Vagina (tissue), 2 donors: ENCODE measurements at regions of chr7 and their contacts with region 1.

Region 1: GRCh38 chr7:71237945-71238344 is 106.0 kb downstream of the GALNT17 start:
- DNase-seq: no peak
- H3K4me3 ChIP-seq: no peak overlapping the region
- H3K27ac ChIP-seq: peak overlapping the region; percentile 66
- H3K4me1 ChIP-seq: peaks cover 20% of the 10 kb centered on the region
- H3K27me3 ChIP-seq: no peaks in the 10 kb centered on the region
- CTCF ChIP-seq: no peak
- POLR2A ChIP-seq: no peak

Region 2: GRCh38 chr7:71193099-71193810 is 44.7 kb before region 1 on chr7:
- intact Hi-C with region 1: loop called (anchors 2 kb)
- DNase-seq: no peak
- H3K4me3 ChIP-seq: no peak overlapping the region
- H3K27ac ChIP-seq: no peak overlapping the region
- H3K4me1 ChIP-seq: no peaks in the 10 kb centered on the region
- H3K27me3 ChIP-seq: no peaks in the 10 kb centered on the region
- CTCF ChIP-seq: no peak
- POLR2A ChIP-seq: no peak

Region 3: DNA sequence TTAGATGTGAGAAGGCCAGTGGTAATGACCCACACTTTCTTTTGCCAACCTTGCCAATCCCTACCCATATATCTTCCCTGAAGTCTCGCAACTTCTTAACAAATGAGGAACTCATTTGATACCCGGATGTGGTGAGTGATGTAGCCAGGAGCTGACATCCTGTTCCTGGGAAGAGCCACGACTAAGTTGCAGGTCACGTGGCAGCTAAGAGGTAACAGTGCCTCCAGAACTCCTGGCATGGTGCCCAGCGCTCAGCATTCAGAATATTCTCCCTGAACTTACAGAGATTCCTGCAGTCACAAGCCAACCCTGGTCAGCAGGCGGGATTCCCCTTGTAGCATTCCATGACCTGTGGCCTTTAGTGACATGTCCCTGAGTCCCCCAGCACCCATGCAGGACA is 176.5 kb after region 1 on chr7:
- intact Hi-C with region 1: no loop called
- DNase-seq: no peak
- H3K4me3 ChIP-seq: no peak overlapping the region
- H3K27ac ChIP-seq: no peak overlapping the region
- H3K4me1 ChIP-seq: no peaks in the 10 kb centered on the region
- H3K27me3 ChIP-seq: no peaks in the 10 kb centered on the region
- CTCF ChIP-seq: no peak
- POLR2A ChIP-seq: no peak

Region 4: DNA sequence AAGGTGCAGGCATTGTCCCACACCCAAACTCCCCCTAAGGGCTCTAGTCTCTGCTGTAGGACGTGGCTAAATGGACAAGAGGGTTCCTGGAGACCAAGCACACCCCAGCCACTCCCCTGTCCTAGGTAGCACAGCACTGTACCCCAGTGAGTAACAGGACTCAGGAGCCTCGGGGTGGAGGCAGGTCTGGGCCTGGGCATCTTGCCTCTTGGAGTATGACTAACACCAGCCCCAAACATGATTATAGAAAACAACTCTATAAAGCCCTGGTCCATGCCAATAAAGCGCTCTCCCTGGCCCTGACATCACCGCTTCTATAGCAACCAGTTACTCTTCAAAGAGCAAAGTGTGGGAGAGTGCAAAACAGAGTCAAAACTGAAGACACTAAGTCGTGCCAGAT is 979.2 kb after region 1 on chr7:
- intact Hi-C with region 1: no loop called
- DNase-seq: no peak
- H3K4me3 ChIP-seq: no peak overlapping the region
- H3K27ac ChIP-seq: peak overlapping the region; percentile 64
- H3K4me1 ChIP-seq: peaks cover 25% of the 10 kb centered on the region
- H3K27me3 ChIP-seq: no peaks in the 10 kb centered on the region
- CTCF ChIP-seq: no peak
- POLR2A ChIP-seq: no peak